Caco-2 (cell line): ENCODE measurements at regions of chr5 and their contacts with region 1.

Region 1: GRCh38 chr5:78287833-78288232 is 6.7 kb downstream of the AP3B1 start:
- DNase-seq: no peak
- H3K4me3 ChIP-seq: no peak overlapping the region
- H3K4me3 Mint-ChIP-seq: no peak overlapping the region
- H3K27ac Mint-ChIP-seq: no peak overlapping the region
- H3K4me1 ChIP-seq: no peaks in the 10 kb centered on the region
- H3K4me1 Mint-ChIP-seq: peaks cover 22% of the 10 kb centered on the region
- H3K27me3 ChIP-seq: no peaks in the 10 kb centered on the region
- H3K27me3 Mint-ChIP-seq: no peaks in the 10 kb centered on the region
- CTCF ChIP-seq: no peak

Region 2: GRCh38 chr5:78190402-78190801 is 97.4 kb before region 1 on chr5:
- CTCF ChIA-PET with region 1: no interaction called
- POLR2A ChIA-PET with region 1: interaction called, 12 read pairs
- intact Hi-C with region 1: no loop called
- DNase-seq: no peak
- H3K4me3 ChIP-seq: no peak overlapping the region
- H3K4me3 Mint-ChIP-seq: no peak overlapping the region
- H3K27ac Mint-ChIP-seq: no peak overlapping the region
- H3K4me1 ChIP-seq: no peaks in the 10 kb centered on the region
- H3K4me1 Mint-ChIP-seq: no peaks in the 10 kb centered on the region
- H3K27me3 ChIP-seq: no peaks in the 10 kb centered on the region
- H3K27me3 Mint-ChIP-seq: no peaks in the 10 kb centered on the region
- CTCF ChIP-seq: no peak

Region 3: DNA sequence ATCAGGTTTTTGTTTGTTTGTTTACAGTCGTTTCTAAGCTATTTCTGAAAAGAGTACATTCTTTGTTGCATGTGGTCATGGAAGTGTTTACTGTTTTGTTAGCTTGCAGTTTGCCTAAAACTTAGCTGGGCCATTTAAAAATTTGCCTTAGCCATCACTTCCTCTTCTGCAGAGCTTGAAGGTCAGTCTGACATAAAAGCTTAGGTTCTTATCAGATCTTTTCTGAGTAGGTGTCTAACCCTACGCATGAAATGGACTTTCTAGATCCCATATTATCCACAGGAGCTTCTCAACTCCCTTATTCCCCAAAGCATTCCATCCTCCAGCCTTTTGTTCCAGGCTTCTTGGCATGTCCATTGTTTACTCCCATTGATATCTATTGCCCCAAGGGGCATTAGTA is 83.6 kb before region 1 on chr5:
- CTCF ChIA-PET with region 1: no interaction called
- POLR2A ChIA-PET with region 1: no interaction called
- intact Hi-C with region 1: no loop called
- DNase-seq: no peak
- H3K4me3 ChIP-seq: no peak overlapping the region
- H3K4me3 Mint-ChIP-seq: no peak overlapping the region
- H3K27ac Mint-ChIP-seq: no peak overlapping the region
- H3K4me1 ChIP-seq: peaks cover 14% of the 10 kb centered on the region; the same call in 1 of the 2 replicates
- H3K4me1 Mint-ChIP-seq: peaks cover 13% of the 10 kb centered on the region
- H3K27me3 ChIP-seq: no peaks in the 10 kb centered on the region
- H3K27me3 Mint-ChIP-seq: no peaks in the 10 kb centered on the region
- CTCF ChIP-seq: no peak